ENCODE measurements at regions of chr5 and their contacts with region 1.

Region 1: DNA sequence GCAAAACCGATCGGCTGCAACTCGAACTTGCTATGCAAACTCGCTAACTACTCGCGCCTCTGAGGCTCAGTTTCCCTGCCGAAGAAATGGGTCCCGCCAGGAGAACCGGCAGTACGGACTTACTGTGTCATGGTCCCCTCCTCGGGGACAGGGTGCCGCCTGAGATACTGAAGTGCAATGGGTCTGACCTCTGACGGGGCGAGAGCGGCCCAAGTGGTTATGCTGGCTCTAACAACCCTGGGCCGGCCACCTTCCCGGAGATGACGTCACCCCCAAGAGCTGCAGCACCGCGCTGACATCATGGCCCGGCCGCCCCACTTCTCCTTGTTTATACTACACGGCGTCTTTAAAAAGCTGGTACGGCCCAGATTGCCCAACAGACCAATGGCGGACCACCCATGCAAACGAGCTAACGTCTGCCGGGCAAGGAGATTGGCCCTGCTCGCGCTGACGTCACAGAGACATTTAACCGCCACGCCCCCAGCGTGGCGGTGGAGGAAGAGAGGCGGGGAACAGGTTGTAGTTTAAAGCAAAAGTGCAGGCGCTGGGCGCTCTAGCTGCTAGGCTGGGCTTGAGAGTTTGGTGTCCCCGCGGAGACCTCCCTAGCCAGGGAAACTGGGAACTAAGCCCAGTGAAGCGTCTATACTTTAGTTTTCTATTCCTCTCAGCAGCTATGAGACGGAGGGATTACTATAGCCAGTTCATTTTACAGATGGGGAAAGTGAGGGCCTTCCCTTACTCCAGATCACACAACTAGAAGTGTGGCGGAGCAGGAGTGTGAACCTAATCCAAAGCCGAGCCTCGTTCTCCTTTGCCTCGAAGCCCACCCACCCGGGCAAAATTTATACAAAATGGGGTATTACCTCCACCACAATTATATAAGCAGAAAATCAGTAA is 654 bp upstream of the RNF44 start:
- H3K4me3 ChIP-seq: peak overlapping the region; percentile 85
- H3K27ac ChIP-seq: peak overlapping the region; percentile 54
- H3K4me1 ChIP-seq: peaks cover 8% of the 10 kb centered on the region; the same call in 1 of the 2 replicates
- CTCF ChIP-seq: no peak

Region 2: GRCh38 chr5:176415952-176416924 is 121.6 kb before region 1 on chr5 and contains the start of gene CLTB:
- CTCF ChIA-PET with region 1: interaction called, 5 read pairs
- POLR2A ChIA-PET with region 1: interaction called, 13 read pairs
- H3K4me3 ChIP-seq: peak within 1 kb of the TSS; percentile 77
- H3K27ac ChIP-seq: peak within 1 kb of the TSS; percentile 66; the same call in 1 of the 2 replicates
- H3K4me1 ChIP-seq: no peaks in the 10 kb centered on the region
- CTCF ChIP-seq: peak; percentile 75

Measured in HEK293 (cell line).